ENCODE measurements at regions of chr1 and their contacts with region 1.

Region 1: GRCh38 chr1:209733409-209734192 is 22.3 kb upstream of the TRAF3IP3 start:
- DNase-seq: no peak
- H3K4me3 Mint-ChIP-seq: peak overlapping the region; percentile 54
- H3K27ac Mint-ChIP-seq: peak overlapping the region; percentile 75
- H3K4me1 Mint-ChIP-seq: peaks cover 49% of the 10 kb centered on the region
- H3K27me3 Mint-ChIP-seq: no peaks in the 10 kb centered on the region

Region 2: DNA sequence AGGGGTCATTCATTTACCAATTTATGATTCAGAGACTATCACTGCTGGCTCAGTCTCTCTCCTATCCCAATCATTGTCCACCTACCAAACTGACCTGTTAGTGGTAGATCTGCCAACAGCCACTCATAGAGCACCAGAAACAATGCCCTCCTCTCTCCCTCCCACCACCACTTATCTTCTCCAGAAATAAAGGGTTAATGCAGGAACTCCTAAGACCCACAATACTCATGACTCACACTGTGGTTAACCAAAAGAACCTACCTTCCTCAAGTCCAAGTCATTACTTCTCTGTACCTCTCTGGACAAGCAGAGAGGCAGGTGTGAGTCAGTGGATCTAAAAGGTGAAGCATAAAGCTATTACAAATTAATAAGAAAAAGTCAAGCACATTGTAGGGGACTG is 191.0 kb before region 1 on chr1:
- CTCF ChIA-PET with region 1: no interaction called
- POLR2A ChIA-PET with region 1: no interaction called
- intact Hi-C with region 1: no loop called
- DNase-seq: no peak
- H3K4me3 Mint-ChIP-seq: no peak overlapping the region
- H3K27ac Mint-ChIP-seq: no peak overlapping the region
- H3K4me1 Mint-ChIP-seq: no peaks in the 10 kb centered on the region
- H3K27me3 Mint-ChIP-seq: peaks cover 23% of the 10 kb centered on the region

Region 3: GRCh38 chr1:209704584-209704983 is 29.0 kb before region 1 on chr1 and contains the start of gene HSD11B1:
- CTCF ChIA-PET with region 1: interaction called, 3 read pairs
- POLR2A ChIA-PET with region 1: interaction called, 23 read pairs
- intact Hi-C with region 1: no loop called
- DNase-seq: peak; percentile 17
- H3K4me3 Mint-ChIP-seq: peak within 1 kb of the TSS; percentile 54
- H3K27ac Mint-ChIP-seq: peak within 1 kb of the TSS; percentile 91
- H3K4me1 Mint-ChIP-seq: peaks cover 78% of the 10 kb centered on the region
- H3K27me3 Mint-ChIP-seq: no peaks in the 10 kb centered on the region
- total RNA-seq, gene HSD11B1: 22.4 to 23.9 TPM

Measured in activated CD4-positive, alpha-beta memory T cell treated with anti-CD3 and anti-CD28 coated beads for 36 hours (primary cell).